Activated B cell treated with CpG ODN at 0.5 μM for 24 hours (primary cell): ENCODE measurements at regions of chr22 and their contacts with region 1.

Region 1: GRCh38 chr22:36856121-36856791 is 4.5 kb upstream of the NCF4 start:
- DNase-seq: peak; percentile 96
- ATAC-seq: peak; percentile 39
- H3K4me3 Mint-ChIP-seq: peak overlapping the region; percentile 69
- H3K27ac Mint-ChIP-seq: peak overlapping the region; percentile 91
- H3K4me1 Mint-ChIP-seq: peaks cover 64% of the 10 kb centered on the region
- H3K27me3 Mint-ChIP-seq: no peaks in the 10 kb centered on the region
- CTCF ChIP-seq: peak; percentile 100

Region 2: GRCh38 chr22:36546092-36546804 is 310.0 kb before region 1 on chr22:
- CTCF ChIA-PET with region 1: interaction called, 9 read pairs
- POLR2A ChIA-PET with region 1: interaction called, 4 read pairs
- intact Hi-C with region 1: loop called (anchors 1 kb)
- DNase-seq: no peak
- ATAC-seq: peak; percentile 82
- H3K4me3 Mint-ChIP-seq: no peak overlapping the region
- H3K27ac Mint-ChIP-seq: no peak overlapping the region
- H3K4me1 Mint-ChIP-seq: peaks cover 28% of the 10 kb centered on the region
- H3K27me3 Mint-ChIP-seq: no peaks in the 10 kb centered on the region
- CTCF ChIP-seq: no peak

Region 3: DNA sequence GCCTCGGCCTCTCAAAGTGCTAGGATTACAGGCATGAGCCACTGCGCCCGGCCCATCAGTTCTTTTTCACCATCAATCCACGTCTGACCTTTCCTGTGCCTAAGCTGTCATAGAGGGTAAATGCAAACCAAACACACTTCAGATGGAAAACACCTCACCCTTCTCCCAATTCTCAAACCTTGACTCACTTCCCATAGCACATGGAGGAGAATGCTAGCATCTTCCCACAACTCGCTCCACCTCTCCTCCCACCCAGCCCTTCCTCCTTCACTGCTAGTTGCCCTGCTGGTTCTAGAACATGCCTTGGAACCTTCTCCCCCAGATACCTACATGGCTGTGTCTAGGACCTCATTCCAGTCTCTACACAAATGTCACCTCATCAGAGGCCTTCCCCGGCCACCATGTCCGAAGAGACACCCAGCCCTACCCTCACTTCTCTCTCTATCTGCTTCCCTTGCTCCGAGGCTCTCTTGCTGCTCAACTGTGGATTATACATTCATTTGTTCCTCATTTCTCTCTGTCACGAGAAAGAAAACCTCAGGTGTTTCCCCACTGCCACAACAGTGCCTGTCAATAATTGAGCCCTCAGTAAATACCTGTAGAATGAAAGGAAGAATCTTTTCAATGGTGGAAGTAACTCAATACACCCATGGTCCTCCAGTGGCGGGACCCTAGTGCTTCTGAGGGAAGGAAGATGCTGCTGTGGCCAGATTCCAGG is 16.7 kb before region 1 on chr22:
- CTCF ChIA-PET with region 1: interaction called, 10 read pairs
- POLR2A ChIA-PET with region 1: interaction called, 4 read pairs
- intact Hi-C with region 1: no loop called
- DNase-seq: no peak
- ATAC-seq: peak; percentile 66
- H3K4me3 Mint-ChIP-seq: peak overlapping the region; percentile 32
- H3K27ac Mint-ChIP-seq: peak overlapping the region; percentile 33
- H3K4me1 Mint-ChIP-seq: peaks cover 13% of the 10 kb centered on the region
- H3K27me3 Mint-ChIP-seq: peaks cover 19% of the 10 kb centered on the region
- CTCF ChIP-seq: no peak

Region 4: DNA sequence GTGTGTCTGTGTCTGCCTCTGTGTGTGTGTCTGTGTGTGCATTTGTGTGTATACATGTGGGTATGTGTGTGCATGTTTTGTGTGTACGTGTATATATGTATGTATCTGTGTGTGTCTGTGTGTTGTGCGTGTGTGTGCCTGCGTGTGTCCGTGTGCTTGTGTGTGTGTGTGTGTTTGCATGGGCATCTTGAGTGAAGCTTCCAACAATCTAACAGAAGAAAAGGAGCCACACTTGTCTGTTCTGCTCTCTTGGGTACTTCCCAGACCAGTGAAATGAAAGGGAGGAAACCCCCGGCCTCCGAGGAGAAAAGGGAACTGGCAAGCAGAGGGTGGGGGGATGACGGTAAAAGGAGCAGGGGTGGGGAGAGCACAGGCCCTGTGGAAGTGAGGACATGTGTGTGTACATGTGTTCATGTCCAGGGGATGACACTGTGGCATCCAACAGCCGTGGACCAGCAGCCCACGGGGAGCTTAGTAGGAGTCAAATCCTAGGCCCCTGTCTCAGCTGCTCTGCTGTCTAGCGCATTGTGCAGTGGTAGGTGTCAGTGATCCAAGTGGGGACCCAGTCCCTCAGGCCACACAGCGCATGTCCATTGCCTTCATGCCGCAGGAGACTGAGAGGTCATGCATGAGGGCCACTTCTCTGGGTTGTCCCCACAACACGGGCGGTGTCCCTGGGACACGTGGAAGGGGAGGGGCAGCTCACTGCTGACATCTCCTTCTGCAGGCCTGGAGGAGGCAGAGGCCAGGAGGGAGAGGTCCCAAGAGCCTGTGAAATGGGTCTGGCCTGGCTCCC is 65.3 kb after region 1 on chr22:
- CTCF ChIA-PET with region 1: interaction called, 6 read pairs
- POLR2A ChIA-PET with region 1: interaction called, 22 read pairs
- intact Hi-C with region 1: loop called (anchors 2 kb)
- DNase-seq: no peak
- ATAC-seq: peak; percentile 89
- H3K4me3 Mint-ChIP-seq: peak overlapping the region; percentile 46
- H3K27ac Mint-ChIP-seq: peak overlapping the region; percentile 57
- H3K4me1 Mint-ChIP-seq: peaks cover 42% of the 10 kb centered on the region
- H3K27me3 Mint-ChIP-seq: no peaks in the 10 kb centered on the region
- CTCF ChIP-seq: no peak

Region 5: GRCh38 chr22:37043828-37044538 is 187.7 kb after region 1 on chr22:
- CTCF ChIA-PET with region 1: interaction called, 6 read pairs
- POLR2A ChIA-PET with region 1: no interaction called
- intact Hi-C with region 1: loop called (anchors 2 kb)
- DNase-seq: peak; percentile 52
- ATAC-seq: peak; percentile 97
- H3K4me3 Mint-ChIP-seq: no peak overlapping the region
- H3K27ac Mint-ChIP-seq: no peak overlapping the region
- H3K4me1 Mint-ChIP-seq: peaks cover 12% of the 10 kb centered on the region
- H3K27me3 Mint-ChIP-seq: peaks cover 14% of the 10 kb centered on the region
- CTCF ChIP-seq: peak; percentile 41